ENCODE measurements at regions of chr14 and their contacts with region 1.

Region 1: GRCh38 chr14:52961060-52961639 is 10.3 kb upstream of the FERMT2 start:
- DNase-seq: no peak
- ATAC-seq: peak; percentile 83

Region 2: DNA sequence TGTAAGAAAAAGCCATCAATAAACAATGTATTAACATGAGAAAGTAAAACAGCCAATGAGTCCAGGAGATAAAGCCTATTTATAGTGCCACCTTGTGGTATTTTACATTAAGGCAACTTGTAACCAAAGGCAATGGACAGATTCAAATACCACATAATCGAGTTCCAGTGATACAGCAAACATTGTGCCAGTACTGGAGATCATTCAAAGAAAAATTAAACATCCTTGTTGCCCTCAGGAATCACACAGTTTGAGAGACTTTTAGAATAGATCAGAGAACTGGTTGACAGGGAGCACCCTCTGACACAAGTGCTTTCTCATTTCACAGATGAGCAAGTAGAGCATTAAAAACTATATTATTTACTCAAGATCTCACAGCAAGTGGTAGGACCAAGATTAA is 93.9 kb after region 1 on chr14:
- intact Hi-C with region 1: loop called (anchors 5 kb)
- DNase-seq: no peak
- ATAC-seq: peak; percentile 54